BJ (cell line): ENCODE measurements at regions of chr10 and their contacts with region 1.

Region 1: GRCh38 chr10:21278491-21279239 is 246.8 kb downstream of the SKIDA1 start:
- DNase-seq: no peak
- H3K4me3 ChIP-seq: no peak overlapping the region
- H3K27me3 ChIP-seq: no peaks in the 10 kb centered on the region
- CTCF ChIP-seq: peak; percentile 82

Region 2: GRCh38 chr10:21292763-21293517 is 14.3 kb after region 1 on chr10:
- CTCF ChIA-PET with region 1: interaction called, 11 read pairs
- POLR2A ChIA-PET with region 1: no interaction called
- DNase-seq: peak; percentile 97
- H3K4me3 ChIP-seq: peak overlapping the region; percentile 16
- H3K27me3 ChIP-seq: no peaks in the 10 kb centered on the region
- CTCF ChIP-seq: no peak

Region 3: DNA sequence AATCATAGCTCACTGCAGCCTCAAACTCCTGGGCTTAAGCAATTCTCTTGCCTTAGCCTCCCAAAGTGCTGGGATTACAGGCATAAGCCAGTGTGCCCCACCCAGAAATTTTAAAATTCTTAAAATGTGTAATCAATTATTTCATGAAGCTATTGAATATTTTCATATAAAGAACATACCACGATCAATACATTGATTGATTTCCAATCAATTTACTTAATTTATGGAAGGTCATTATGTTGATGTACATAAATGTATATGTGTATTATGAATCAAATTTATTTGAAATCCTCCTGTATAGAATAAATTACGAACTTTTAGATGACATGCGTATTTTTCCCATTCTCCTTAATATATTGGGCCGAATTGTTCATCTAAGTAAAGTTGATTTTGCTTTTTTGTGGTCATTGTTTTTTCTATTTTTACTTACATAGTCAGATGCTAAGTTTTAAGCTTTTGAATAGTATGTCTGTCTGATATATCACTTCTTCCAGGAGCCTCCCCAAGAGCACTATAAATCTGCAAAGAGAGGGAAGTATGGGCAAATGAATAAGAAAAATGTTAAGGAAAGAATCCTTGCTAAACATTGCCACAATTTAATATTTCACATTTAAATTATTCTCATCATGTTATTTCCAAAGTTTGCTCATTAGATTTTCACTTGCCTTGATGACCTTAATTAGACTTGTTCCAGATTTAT is 211.5 kb after region 1 on chr10:
- CTCF ChIA-PET with region 1: interaction called, 35 read pairs
- POLR2A ChIA-PET with region 1: no interaction called
- DNase-seq: no peak
- H3K4me3 ChIP-seq: no peak overlapping the region
- H3K27me3 ChIP-seq: no peaks in the 10 kb centered on the region
- CTCF ChIP-seq: no peak

Region 4: DNA sequence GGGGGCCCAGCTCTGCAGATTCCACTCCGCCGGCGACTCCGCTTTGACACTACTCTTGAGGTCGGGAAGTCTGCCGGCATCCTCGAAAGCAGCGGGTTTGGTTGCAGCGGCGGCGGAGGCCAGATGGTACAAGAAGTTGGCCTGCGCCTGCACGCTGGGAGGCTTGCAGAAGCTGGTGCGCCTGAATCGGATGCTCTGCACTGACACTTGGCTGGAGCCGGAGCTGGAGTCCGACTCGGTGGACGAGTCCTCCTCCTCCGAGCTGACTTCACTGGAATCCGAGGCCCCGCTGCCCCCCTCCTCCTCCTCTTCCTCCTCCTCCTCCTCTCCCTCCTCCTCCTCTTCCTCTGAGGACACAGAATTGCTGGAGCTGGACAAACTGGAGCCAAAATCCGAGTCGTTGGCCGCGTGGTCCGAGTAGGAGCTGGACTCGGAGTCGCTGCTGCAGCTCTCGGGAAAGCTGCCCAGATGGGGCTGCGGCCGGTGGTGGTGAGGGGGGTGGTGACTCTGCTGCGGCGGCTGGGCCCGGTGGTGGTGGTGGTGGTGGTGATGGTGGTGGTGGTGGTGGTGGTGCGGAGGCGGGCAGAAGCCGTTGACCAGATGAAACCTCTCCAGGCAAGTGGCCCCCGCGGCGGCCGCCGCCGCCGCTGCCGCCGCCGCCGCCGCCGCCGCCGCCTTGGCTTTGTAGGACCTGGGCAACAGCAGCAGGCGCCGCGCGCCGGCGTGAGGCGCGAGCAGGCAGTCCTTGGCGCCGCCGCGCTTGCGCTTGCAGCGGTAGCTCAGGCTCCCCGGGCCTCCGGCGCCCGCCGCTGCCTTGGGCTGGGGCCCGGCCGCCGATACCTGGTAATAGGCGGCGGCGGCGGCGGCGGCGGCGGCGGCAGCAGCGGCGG is 237.8 kb after region 1 on chr10:
- CTCF ChIA-PET with region 1: interaction called, 17 read pairs
- POLR2A ChIA-PET with region 1: interaction called, 17 read pairs
- DNase-seq: no peak
- H3K4me3 ChIP-seq: peak overlapping the region; percentile 59
- H3K27me3 ChIP-seq: no peaks in the 10 kb centered on the region
- CTCF ChIP-seq: no peak

Region 5: GRCh38 chr10:21634599-21635365 is 356.1 kb after region 1 on chr10:
- CTCF ChIA-PET with region 1: no interaction called
- POLR2A ChIA-PET with region 1: no interaction called
- DNase-seq: no peak
- H3K4me3 ChIP-seq: no peak overlapping the region
- H3K27me3 ChIP-seq: no peaks in the 10 kb centered on the region
- CTCF ChIP-seq: no peak

Region 6: DNA sequence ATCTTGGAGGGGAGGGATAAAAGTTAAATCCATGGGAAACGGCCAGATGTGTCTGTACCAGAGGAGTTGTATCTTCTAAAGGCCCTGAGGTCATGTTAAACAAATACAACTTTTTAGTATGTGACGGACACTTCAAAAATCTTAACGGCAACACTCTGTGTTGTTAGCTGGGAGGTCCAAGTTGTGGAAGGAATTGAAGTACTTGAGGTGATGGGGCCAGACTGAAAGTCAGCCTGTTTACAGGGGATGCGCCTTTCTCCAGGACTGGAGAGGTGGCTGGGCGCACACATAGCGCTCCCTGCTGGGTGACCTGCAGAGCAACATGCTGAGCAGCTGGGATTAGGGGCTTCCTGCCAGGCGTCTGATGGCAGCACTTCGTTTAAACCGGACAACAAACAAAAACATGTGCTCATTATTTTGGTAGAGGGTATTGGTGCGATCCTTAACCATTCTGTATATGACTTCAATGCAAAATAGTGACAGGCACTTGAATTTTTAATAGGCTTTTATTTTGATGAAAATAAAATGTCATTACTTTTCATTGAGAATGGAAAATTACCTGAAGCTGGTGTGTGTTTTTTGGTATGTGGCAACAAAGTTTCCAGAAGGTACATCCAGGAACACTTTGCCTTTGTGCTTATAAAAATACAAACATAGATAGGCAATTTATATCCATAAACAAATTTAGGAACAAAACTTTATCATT is 453.6 kb after region 1 on chr10:
- CTCF ChIA-PET with region 1: interaction called, 25 read pairs
- POLR2A ChIA-PET with region 1: no interaction called
- DNase-seq: peak; percentile 25
- H3K4me3 ChIP-seq: no peak overlapping the region
- H3K27me3 ChIP-seq: no peaks in the 10 kb centered on the region
- CTCF ChIP-seq: peak; percentile 97